ENCODE measurements at regions of chr6 and their contacts with region 1.

Region 1: GRCh38 chr6:13328076-13328874 is at the start of gene TBC1D7:
- DNase-seq: peak; percentile 94 to 96
- H3K4me3 ChIP-seq: peak within 1 kb of the TSS; percentile 88
- H3K4me3 Mint-ChIP-seq: peak within 1 kb of the TSS; percentile 81
- H3K27ac Mint-ChIP-seq: peak within 1 kb of the TSS; percentile 85
- H3K4me1 ChIP-seq: peaks cover 36% of the 10 kb centered on the region
- H3K4me1 Mint-ChIP-seq: peaks cover 29% of the 10 kb centered on the region
- H3K27me3 ChIP-seq: no peaks in the 10 kb centered on the region
- H3K27me3 Mint-ChIP-seq: no peaks in the 10 kb centered on the region
- CTCF ChIP-seq: peak; percentile 8 to 35
- total RNA-seq, gene TBC1D7: 132 and 152 TPM in 2 replicates

Region 2: DNA sequence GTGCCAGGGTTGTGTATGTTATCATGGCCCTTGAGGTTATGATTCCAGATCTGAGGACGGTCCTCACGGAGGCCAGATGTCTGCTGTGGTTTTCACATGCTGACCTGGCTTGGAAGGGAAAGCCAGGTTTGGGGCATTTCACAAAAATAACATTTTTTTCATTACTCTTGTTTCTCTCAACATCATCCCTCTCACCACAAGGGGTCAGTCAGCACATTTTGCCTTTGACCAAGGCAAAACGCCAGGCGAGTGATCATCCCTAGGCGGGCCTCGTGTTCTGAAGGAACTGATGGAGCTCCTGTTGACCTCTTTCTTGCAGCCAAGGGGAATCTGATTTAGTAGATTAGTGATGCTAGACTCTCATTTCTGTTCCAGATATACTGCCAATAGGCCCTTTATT is 133.4 kb before region 1 on chr6:
- CTCF ChIA-PET with region 1: interaction called, 12 read pairs
- POLR2A ChIA-PET with region 1: no interaction called
- intact Hi-C with region 1: loop called (anchors 1 kb)
- DNase-seq: peak; percentile 70 to 71
- H3K4me3 ChIP-seq: no peak overlapping the region
- H3K4me3 Mint-ChIP-seq: no peak overlapping the region
- H3K27ac Mint-ChIP-seq: no peak overlapping the region
- H3K4me1 ChIP-seq: 0 out of 2 replicates have a peak, but pooled peaks cover 4% of the 10 kb centered on the region
- H3K4me1 Mint-ChIP-seq: peaks cover 8% of the 10 kb centered on the region
- H3K27me3 ChIP-seq: no peaks in the 10 kb centered on the region
- H3K27me3 Mint-ChIP-seq: no peaks in the 10 kb centered on the region
- CTCF ChIP-seq: peak; percentile 55 to 77

Region 3: DNA sequence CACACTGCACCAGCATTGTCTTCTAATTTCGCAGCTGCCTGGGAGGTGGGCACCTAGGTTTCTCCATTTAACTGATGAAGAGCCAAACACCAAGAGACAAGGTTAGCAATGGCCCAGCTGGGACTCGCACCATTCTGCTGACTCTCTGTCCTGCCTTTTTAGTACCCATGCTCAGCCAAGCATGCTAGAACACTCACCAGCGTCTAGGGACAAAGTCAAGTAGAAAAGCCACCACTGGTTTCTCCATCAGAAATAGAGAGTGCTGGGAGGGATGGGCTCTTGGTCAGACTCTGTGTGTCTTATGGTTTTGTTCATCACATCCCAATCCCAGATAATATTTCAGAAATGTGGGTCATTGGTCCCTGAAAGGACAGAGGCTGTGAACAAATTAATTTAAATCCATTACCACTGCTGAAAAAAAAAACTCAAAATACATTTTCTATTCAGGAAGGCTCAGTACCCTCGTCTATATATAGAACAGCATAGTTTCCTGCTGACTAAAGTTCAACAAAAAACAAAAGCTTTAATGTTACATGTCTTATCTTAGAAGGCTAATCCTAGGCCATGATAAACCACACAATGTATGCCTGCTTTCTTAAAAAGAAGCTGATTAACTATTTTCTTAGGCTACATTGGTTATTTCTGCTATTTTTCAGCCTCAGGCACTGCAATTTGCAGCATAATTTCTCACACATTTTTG is 110.9 kb before region 1 on chr6:
- CTCF ChIA-PET with region 1: interaction called, 3 read pairs
- POLR2A ChIA-PET with region 1: no interaction called
- intact Hi-C with region 1: loop called (anchors 5 kb)
- DNase-seq: peak in 1 of 2 experiments; percentile 25
- H3K4me3 ChIP-seq: no peak overlapping the region
- H3K4me3 Mint-ChIP-seq: peak overlapping the region; percentile 1
- H3K27ac Mint-ChIP-seq: peak overlapping the region; percentile 81
- H3K4me1 ChIP-seq: peaks cover 39% of the 10 kb centered on the region
- H3K4me1 Mint-ChIP-seq: peaks cover 23% of the 10 kb centered on the region
- H3K27me3 ChIP-seq: no peaks in the 10 kb centered on the region
- H3K27me3 Mint-ChIP-seq: no peaks in the 10 kb centered on the region
- CTCF ChIP-seq: no peak

Region 4: DNA sequence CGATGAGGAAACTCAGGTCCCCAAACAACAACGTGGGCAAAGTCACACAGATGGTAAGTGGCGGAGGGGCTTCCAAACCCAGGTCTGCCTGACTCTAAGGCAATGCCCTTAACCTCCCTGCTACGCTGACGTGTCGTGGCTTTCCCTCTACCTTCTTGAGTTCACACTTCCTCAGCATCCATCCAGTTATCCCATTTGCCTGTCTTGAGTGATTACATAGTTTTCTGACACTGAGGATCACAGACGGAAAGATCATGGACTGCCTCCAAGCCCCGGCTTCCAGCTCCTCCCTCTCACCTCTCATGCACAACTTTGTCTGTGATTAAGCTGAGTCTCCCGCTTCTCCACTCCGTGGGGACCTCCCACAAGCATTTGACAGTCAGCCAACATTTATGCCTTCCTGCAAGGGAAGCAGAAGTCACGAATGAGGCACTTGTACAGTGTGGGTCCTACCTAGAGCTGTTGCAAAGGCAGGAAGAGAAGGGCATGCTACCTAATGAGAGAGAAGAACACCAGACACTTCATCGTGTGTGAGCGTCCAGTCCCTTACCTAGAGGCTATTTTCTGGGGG is 33.7 kb before region 1 on chr6:
- CTCF ChIA-PET with region 1: interaction called, 3 read pairs
- POLR2A ChIA-PET with region 1: interaction called, 4 read pairs
- intact Hi-C with region 1: loop called (anchors 1 kb)
- DNase-seq: no peak
- H3K4me3 ChIP-seq: no peak overlapping the region
- H3K4me3 Mint-ChIP-seq: no peak overlapping the region
- H3K27ac Mint-ChIP-seq: peak overlapping the region; percentile 58
- H3K4me1 ChIP-seq: peaks cover 22% of the 10 kb centered on the region
- H3K4me1 Mint-ChIP-seq: peaks cover 32% of the 10 kb centered on the region
- H3K27me3 ChIP-seq: no peaks in the 10 kb centered on the region
- H3K27me3 Mint-ChIP-seq: no peaks in the 10 kb centered on the region
- CTCF ChIP-seq: no peak

Region 5: GRCh38 chr6:13307508-13307995 is 20.7 kb before region 1 on chr6:
- CTCF ChIA-PET with region 1: no interaction called
- POLR2A ChIA-PET with region 1: interaction called, 7 read pairs
- intact Hi-C with region 1: loop called (anchors 2 kb)
- DNase-seq: no peak
- H3K4me3 ChIP-seq: no peak overlapping the region
- H3K4me3 Mint-ChIP-seq: no peak overlapping the region
- H3K27ac Mint-ChIP-seq: peak overlapping the region; percentile 38
- H3K4me1 ChIP-seq: peaks cover 28% of the 10 kb centered on the region
- H3K4me1 Mint-ChIP-seq: peaks cover 39% of the 10 kb centered on the region
- H3K27me3 ChIP-seq: no peaks in the 10 kb centered on the region
- H3K27me3 Mint-ChIP-seq: no peaks in the 10 kb centered on the region
- CTCF ChIP-seq: no peak

Region 6: GRCh38 chr6:13574149-13574570 is 245.9 kb after region 1 on chr6:
- CTCF ChIA-PET with region 1: interaction called, 5 read pairs
- POLR2A ChIA-PET with region 1: interaction called, 3 read pairs
- intact Hi-C with region 1: loop called (anchors 2 kb)
- DNase-seq: peak; percentile 96 to 98
- H3K4me3 ChIP-seq: peak overlapping the region; percentile 67
- H3K4me3 Mint-ChIP-seq: peak overlapping the region; percentile 85
- H3K27ac Mint-ChIP-seq: peak overlapping the region; percentile 90
- H3K4me1 ChIP-seq: peaks cover 14% of the 10 kb centered on the region
- H3K4me1 Mint-ChIP-seq: peaks cover 10% of the 10 kb centered on the region
- H3K27me3 ChIP-seq: no peaks in the 10 kb centered on the region
- H3K27me3 Mint-ChIP-seq: no peaks in the 10 kb centered on the region
- CTCF ChIP-seq: peak; percentile 57 to 69

Measured in Caco-2 (cell line).